ENCODE measurements at regions of chr6 and their contacts with region 1.

Region 1: GRCh38 chr6:30396833-30397479 is 52.0 kb downstream of the RPP21 start:
- DNase-seq: peak; percentile 55 to 80 (median 74)
- H3K4me3 ChIP-seq: peak overlapping the region in 2 of 59 donors; percentile 11 to 22
- H3K27ac ChIP-seq: no peak overlapping the region
- H3K27me3 ChIP-seq: peaks cover 0 to 27% (median 5%) of the 10 kb centered on the region in 45 donors
- CTCF ChIP-seq: peak; percentile 40 to 84 (median 74)

Region 2: GRCh38 chr6:28940858-28941680 is 1455.9 kb before region 1 on chr6:
- intact Hi-C with region 1: no loop called
- DNase-seq: peak in 8 of 10 donors; percentile 57 to 79 (median 70)
- H3K4me3 ChIP-seq: peak overlapping the region; percentile 41 to 89 (median 72)
- H3K27ac ChIP-seq: peak overlapping the region; percentile 12 to 94 (median 80)
- H3K27me3 ChIP-seq: no peaks in the 10 kb centered on the region
- CTCF ChIP-seq: peak in 7 of 56 donors; percentile 4 to 33 (median 10)

Region 3: GRCh38 chr6:30219244-30219643 is 177.7 kb before region 1 on chr6:
- intact Hi-C with region 1: loop called in 1 of 2 experiments (anchors 2 kb)
- DNase-seq: peak in 3 of 10 donors; percentile 24 to 71 (median 46)
- H3K4me3 ChIP-seq: peak overlapping the region in 2 of 59 donors; percentile 4 to 16
- H3K27ac ChIP-seq: peak overlapping the region in 11 of 59 donors; percentile 8 to 78 (median 39)
- H3K27me3 ChIP-seq: no peaks in the 10 kb centered on the region
- CTCF ChIP-seq: peak; percentile 45 to 85 (median 72)

Region 4: DNA sequence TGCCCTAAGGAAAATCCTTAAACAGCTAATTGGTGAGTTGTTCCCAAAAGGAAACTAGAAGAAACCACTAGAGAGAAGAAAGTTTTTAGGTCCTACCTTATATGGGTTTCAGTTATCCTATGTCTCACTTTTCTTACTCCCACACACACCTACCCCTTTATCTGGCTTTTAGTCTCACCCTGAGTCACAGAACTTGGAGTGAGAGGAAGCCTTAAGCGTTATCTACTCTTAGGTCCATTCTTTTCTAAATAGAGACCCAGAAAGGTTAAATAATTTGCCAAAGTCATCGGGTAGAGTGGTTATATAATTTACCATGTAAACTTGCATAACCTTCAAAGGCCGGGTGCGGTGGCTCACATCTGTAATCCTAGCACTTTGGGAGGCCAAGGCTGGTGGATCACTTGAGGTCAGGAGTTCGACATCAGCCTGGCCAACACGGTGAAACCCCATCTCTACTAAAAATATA is 56.3 kb before region 1 on chr6:
- intact Hi-C with region 1: no loop called
- DNase-seq: no peak
- H3K4me3 ChIP-seq: no peak overlapping the region
- H3K27ac ChIP-seq: no peak overlapping the region
- H3K27me3 ChIP-seq: no peaks in the 10 kb centered on the region
- CTCF ChIP-seq: no peak

Region 5: GRCh38 chr6:30357678-30358540 is 39.0 kb before region 1 on chr6:
- intact Hi-C with region 1: loop called in 1 of 2 experiments (anchors 2 kb)
- DNase-seq: peak in 9 of 10 donors; percentile 57 to 80 (median 66)
- H3K4me3 ChIP-seq: peak overlapping the region; percentile 28 to 70 (median 52)
- H3K27ac ChIP-seq: peak overlapping the region in 35 of 59 donors; percentile 11 to 78 (median 54)
- H3K27me3 ChIP-seq: peaks cover 0 to 38% (median 7%) of the 10 kb centered on the region in 45 donors
- CTCF ChIP-seq: peak; percentile 51 to 87 (median 75)

Region 6: GRCh38 chr6:30571075-30571768 is 174.3 kb after region 1 on chr6 and contains the start of gene ABCF1:
- intact Hi-C with region 1: no loop called
- DNase-seq: peak; percentile 97 to 100 (median 98)
- H3K4me3 ChIP-seq: peak within 1 kb of the TSS; percentile 60 to 99 (median 84)
- H3K27ac ChIP-seq: peak within 1 kb of the TSS; percentile 16 to 95 (median 87)
- H3K27me3 ChIP-seq: no peaks in the 10 kb centered on the region
- CTCF ChIP-seq: peak in 27 of 56 donors; percentile 1 to 53 (median 28)
- total RNA-seq, gene ABCF1: 24.2 to 44.5 (median 34.1) TPM